Sigmoid colon (tissue), 7 donors: ENCODE measurements at regions of chrX and their contacts with region 1.

Region 1: GRCh38 chrX:152108527-152108926 is 29.9 kb downstream of the MAGEA10 start:
- DNase-seq: no peak
- H3K4me3 ChIP-seq: no peak overlapping the region
- H3K27ac ChIP-seq: no peak overlapping the region
- H3K4me1 ChIP-seq: no peaks in the 10 kb centered on the region
- H3K27me3 ChIP-seq: no peaks in the 10 kb centered on the region
- CTCF ChIP-seq: no peak
- EP300 ChIP-seq: no peak
- POLR2A ChIP-seq: no peak

Region 2: DNA sequence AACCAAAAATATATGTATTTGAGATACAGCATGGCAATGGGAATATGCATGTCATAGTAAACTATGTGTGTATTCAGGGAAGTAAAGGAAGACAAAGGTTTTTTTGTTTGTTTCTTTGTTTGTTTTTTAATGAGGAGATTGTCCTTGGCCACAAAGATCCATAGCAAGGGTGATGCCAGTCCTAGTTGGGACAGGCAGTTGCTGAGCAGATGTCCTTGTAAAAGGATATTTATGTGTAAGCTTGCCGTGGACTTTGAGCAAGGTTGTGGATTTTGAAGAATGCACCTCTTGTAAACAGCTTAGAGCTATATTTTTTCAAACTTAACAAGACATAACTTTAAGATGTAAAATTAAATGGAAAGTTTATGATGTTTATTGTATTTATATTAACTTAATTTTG is 64.1 kb before region 1 on chrX:
- intact Hi-C with region 1: loop called (anchors 10 kb)
- DNase-seq: no peak
- H3K4me3 ChIP-seq: no peak overlapping the region
- H3K27ac ChIP-seq: no peak overlapping the region
- H3K4me1 ChIP-seq: no peaks in the 10 kb centered on the region
- H3K27me3 ChIP-seq: no peaks in the 10 kb centered on the region
- CTCF ChIP-seq: no peak
- EP300 ChIP-seq: no peak
- POLR2A ChIP-seq: no peak

Region 3: DNA sequence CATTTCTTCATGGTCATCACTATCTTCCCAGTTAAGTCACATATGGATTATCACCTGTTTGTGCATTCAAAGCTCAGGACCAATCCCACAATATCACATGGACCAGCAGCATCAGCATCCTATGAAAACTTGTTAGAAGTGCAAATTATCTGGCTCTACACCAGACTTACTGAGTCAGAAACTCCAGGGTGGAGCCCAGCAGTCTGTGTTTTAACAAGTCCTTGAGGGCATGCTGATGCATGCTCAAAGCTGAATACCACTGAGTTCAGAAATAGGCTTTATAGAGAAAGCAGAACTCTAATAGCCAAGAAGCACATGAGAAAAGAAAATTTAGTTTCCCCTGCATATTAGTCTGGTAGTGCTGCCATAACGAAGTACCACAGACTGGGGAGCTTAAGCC is 466.8 kb after region 1 on chrX:
- intact Hi-C with region 1: no loop called
- DNase-seq: no peak
- H3K4me3 ChIP-seq: no peak overlapping the region
- H3K27ac ChIP-seq: no peak overlapping the region
- H3K4me1 ChIP-seq: no peaks in the 10 kb centered on the region
- H3K27me3 ChIP-seq: no peaks in the 10 kb centered on the region
- CTCF ChIP-seq: no peak
- EP300 ChIP-seq: no peak
- POLR2A ChIP-seq: no peak